ENCODE measurements at regions of chr3 and their contacts with region 1.

Region 1: DNA sequence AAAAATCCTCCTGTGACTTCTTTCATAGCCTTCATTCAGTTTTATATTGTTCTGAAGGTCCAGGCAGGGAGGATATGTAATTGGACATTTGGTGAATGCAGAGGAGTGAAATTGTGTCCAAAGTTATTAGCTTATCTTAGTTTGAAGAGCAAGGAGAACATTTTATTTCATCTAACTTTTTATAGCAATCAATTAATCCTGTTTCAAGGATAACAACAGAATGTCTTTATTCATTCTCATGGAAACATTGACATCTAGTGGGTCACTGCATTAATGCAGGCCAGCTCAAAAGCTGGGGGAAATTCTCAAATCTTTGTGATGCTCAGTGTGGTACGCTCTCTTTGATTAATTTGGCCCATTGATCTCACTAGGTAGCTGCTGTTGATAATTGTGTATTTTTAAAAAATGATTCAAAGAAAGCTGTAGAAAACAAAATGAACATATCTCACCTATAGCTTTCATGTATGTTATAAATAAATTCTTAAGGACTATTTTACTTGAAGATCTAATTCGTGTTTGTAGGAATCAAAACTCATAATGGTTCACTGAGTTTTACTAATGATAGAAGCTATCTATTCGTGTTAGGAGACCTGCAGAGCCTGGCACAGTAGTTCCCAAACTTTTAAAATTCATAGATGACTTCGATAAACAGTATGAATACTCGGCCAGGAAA is 150.8 kb upstream of the KCNMB2 start:
- DNase-seq: peak in 1 of 2 donors; percentile 61
- ATAC-seq: peak in 2 of 3 donors; percentile 54 to 66
- H3K4me3 ChIP-seq: no peak overlapping the region
- H3K4me3 Mint-ChIP-seq: no peak overlapping the region
- H3K27ac ChIP-seq: no peak overlapping the region
- H3K27ac Mint-ChIP-seq: no peak overlapping the region
- H3K4me1 ChIP-seq: no peaks in the 10 kb centered on the region
- H3K4me1 Mint-ChIP-seq: no peaks in the 10 kb centered on the region
- H3K27me3 ChIP-seq: no peaks in the 10 kb centered on the region
- H3K27me3 Mint-ChIP-seq: peaks cover 0 to 8% of the 10 kb centered on the region in 2 donors
- CTCF ChIP-seq: peak; percentile 76

Region 2: GRCh38 chr3:177050501-177051237 is 1334.7 kb before region 1 on chr3:
- intact Hi-C with region 1: loop called (anchors 1 kb)
- DNase-seq: peak in 1 of 2 donors; percentile 78
- ATAC-seq: peak; percentile 71 to 88 (median 82)
- H3K4me3 ChIP-seq: no peak overlapping the region
- H3K4me3 Mint-ChIP-seq: no peak overlapping the region
- H3K27ac ChIP-seq: no peak overlapping the region
- H3K27ac Mint-ChIP-seq: no peak overlapping the region
- H3K4me1 ChIP-seq: no peaks in the 10 kb centered on the region
- H3K4me1 Mint-ChIP-seq: peaks cover 0 to 8% of the 10 kb centered on the region in 2 donors
- H3K27me3 ChIP-seq: no peaks in the 10 kb centered on the region
- H3K27me3 Mint-ChIP-seq: no peaks in the 10 kb centered on the region
- CTCF ChIP-seq: peak; percentile 87

Measured in natural killer cell (primary cell).